GM12878 (cell line): ENCODE measurements at regions of chr5 and their contacts with region 1.

Region 1: DNA sequence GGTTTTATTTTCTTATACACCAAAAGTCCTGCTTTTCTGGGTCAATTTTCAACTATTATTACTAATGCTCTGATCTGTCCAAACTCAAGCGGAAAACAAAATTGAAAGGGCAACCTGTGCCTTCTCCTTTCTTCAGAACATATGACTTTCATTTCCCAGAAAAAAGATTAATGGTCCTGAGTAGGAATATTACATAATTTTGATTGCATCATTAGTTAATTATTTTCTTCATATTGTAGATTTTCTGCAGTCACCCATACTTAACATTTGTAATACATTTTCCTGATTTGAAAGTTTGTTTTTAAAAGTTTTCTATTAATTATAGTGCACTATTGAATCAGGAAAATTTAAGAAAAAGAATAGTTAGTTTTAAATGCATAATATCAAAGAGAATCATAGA is 1.7 kb upstream of the PCDHB8 start:
- DNase-seq: no peak
- ATAC-seq: no peak
- H3K4me3 ChIP-seq: no peak overlapping the region
- H3K27ac ChIP-seq: no peak overlapping the region
- H3K4me1 ChIP-seq: no peaks in the 10 kb centered on the region
- H3K27me3 ChIP-seq: no peaks in the 10 kb centered on the region
- CTCF ChIP-seq: no peak
- EP300 ChIP-seq: no peak
- POLR2A ChIP-seq: no peak
- RAD21 ChIP-seq: no peak

Region 2: DNA sequence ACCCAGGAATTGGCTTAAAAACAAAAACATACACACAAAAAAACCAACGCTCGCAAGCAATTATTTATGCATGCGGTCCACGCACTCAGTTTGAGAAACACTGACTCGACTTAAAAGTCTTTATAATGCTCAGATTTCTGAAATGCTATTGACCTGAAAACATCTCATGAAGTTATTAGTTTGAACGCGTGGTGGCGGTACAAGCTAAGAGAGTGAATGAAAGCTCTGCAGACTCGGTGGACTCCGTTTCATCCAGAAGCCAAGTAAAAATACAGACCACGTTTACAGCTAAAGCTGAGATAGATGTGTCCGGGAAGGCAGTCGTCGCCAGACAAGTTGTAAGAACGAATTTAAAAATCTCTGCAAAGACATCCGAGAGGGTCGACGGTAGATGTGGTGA is 26.1 kb before region 1 on chr5 and contains the start of gene PCDHB6:
- CTCF ChIA-PET with region 1: no interaction called
- POLR2A ChIA-PET with region 1: no interaction called
- RAD21 ChIA-PET with region 1: no interaction called
- SMC1A ChIA-PET with region 1: no interaction called
- in situ Hi-C with region 1: no loop called
- intact Hi-C with region 1: no loop called
- DNase-seq: no peak
- ATAC-seq: no peak; the same call in 2 of the 3 replicates
- H3K4me3 ChIP-seq: no peak within 1 kb of the TSS
- H3K27ac ChIP-seq: no peak within 1 kb of the TSS
- H3K4me1 ChIP-seq: no peaks in the 10 kb centered on the region
- H3K27me3 ChIP-seq: no peaks in the 10 kb centered on the region
- CTCF ChIP-seq: no peak; a peak in 1 of 6 replicates
- EP300 ChIP-seq: no peak
- POLR2A ChIP-seq: no peak
- RAD21 ChIP-seq: no peak
- polyA plus RNA-seq, gene PCDHB6: not detected

Region 3: DNA sequence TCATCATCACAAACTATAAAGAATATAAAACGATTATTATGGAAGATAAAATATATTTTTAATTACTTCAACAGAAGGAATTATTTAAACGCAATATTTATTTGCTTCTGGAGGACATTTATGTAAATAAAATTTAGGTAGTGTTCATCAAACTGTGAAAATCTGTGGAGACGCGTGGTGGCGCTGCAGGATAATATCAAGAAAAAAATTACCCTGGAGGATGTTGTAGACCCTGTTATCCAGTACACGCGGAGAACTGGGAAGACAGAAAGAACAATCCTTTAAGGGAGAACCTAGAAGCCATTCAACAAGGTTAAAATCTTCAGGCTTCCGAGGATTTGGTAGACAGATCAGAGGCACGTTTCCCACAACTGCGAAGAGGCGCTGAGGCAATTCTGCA is 32.5 kb after region 1 on chr5 and contains the start of gene PCDHB12:
- CTCF ChIA-PET with region 1: no interaction called
- POLR2A ChIA-PET with region 1: no interaction called
- RAD21 ChIA-PET with region 1: no interaction called
- SMC1A ChIA-PET with region 1: no interaction called
- in situ Hi-C with region 1: loop called (anchors 5 kb)
- intact Hi-C with region 1: no loop called
- DNase-seq: no peak
- ATAC-seq: no peak
- H3K4me3 ChIP-seq: no peak within 1 kb of the TSS
- H3K27ac ChIP-seq: no peak within 1 kb of the TSS
- H3K4me1 ChIP-seq: no peaks in the 10 kb centered on the region
- H3K27me3 ChIP-seq: no peaks in the 10 kb centered on the region
- CTCF ChIP-seq: no peak; a peak in 1 of 6 replicates
- EP300 ChIP-seq: no peak
- POLR2A ChIP-seq: no peak
- RAD21 ChIP-seq: no peak
- polyA plus RNA-seq, gene PCDHB12: not detected